Naive thymus-derived CD4-positive, alpha-beta T cell (primary cell): ENCODE measurements at regions of chr5 and their contacts with region 1.

Region 1: DNA sequence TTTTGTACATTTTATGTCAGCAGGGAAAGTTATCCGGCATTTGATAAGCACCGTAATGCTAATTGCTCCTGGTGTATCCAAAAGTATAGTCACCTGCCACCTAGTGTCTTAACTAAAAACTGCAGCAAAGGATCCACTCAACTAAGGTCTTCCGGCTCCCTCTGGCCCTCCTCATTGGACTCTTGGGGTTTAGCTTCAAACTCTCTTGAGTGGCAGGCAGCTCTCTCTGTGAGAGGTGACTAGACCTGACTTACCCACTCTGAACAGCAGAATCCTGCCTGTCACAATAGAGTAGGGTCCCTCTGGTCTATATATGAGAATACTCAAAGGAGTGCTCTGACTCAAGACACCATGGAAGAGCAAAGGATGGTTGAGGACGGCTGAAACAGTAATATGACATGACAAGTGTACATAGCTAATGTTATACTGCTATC is 60.3 kb upstream of the CAST start:
- DNase-seq: peak in 7 of 9 donors; percentile 36 to 68 (median 65)
- ATAC-seq: peak; percentile 87
- H3K4me3 ChIP-seq: no peak overlapping the region
- H3K4me3 Mint-ChIP-seq: peak overlapping the region in 1 of 10 donors; percentile 2
- H3K27ac ChIP-seq: no peak overlapping the region
- H3K27ac Mint-ChIP-seq: no peak overlapping the region
- H3K4me1 ChIP-seq: no peaks in the 10 kb centered on the region
- H3K4me1 Mint-ChIP-seq: peaks cover 0 to 3% (median 0%) of the 10 kb centered on the region in 7 donors
- H3K27me3 ChIP-seq: no peaks in the 10 kb centered on the region
- H3K27me3 Mint-ChIP-seq: peaks cover 4 to 16% (median 4%) of the 10 kb centered on the region in 5 donors

Region 2: GRCh38 chr5:95858661-95859326 is 743.0 kb before region 1 on chr5:
- CTCF ChIA-PET with region 1: interaction called, 3 read pairs
- POLR2A ChIA-PET with region 1: no interaction called
- intact Hi-C with region 1: loop called (anchors 1 kb)
- DNase-seq: peak; percentile 81 to 91 (median 87)
- ATAC-seq: peak; percentile 94
- H3K4me3 ChIP-seq: no peak overlapping the region
- H3K4me3 Mint-ChIP-seq: peak overlapping the region; percentile 25 to 78 (median 62)
- H3K27ac ChIP-seq: no peak overlapping the region
- H3K27ac Mint-ChIP-seq: peak overlapping the region; percentile 10 to 85 (median 56)
- H3K4me1 ChIP-seq: no peaks in the 10 kb centered on the region
- H3K4me1 Mint-ChIP-seq: peaks cover 11 to 43% (median 16%) of the 10 kb centered on the region in 7 donors
- H3K27me3 ChIP-seq: no peaks in the 10 kb centered on the region
- H3K27me3 Mint-ChIP-seq: peaks cover 0 to 18% (median 14%) of the 10 kb centered on the region in 5 donors

Region 3: GRCh38 chr5:96336351-96336985 is 265.4 kb before region 1 on chr5:
- CTCF ChIA-PET with region 1: interaction called, 183 read pairs
- POLR2A ChIA-PET with region 1: no interaction called
- intact Hi-C with region 1: no loop called
- DNase-seq: peak in 8 of 9 donors; percentile 41 to 72 (median 65)
- ATAC-seq: peak; percentile 92
- H3K4me3 ChIP-seq: no peak overlapping the region
- H3K4me3 Mint-ChIP-seq: no peak overlapping the region
- H3K27ac ChIP-seq: no peak overlapping the region
- H3K27ac Mint-ChIP-seq: no peak overlapping the region
- H3K4me1 ChIP-seq: no peaks in the 10 kb centered on the region
- H3K4me1 Mint-ChIP-seq: peaks cover 0 to 9% (median 0%) of the 10 kb centered on the region in 7 donors
- H3K27me3 ChIP-seq: no peaks in the 10 kb centered on the region
- H3K27me3 Mint-ChIP-seq: peaks cover 7 to 26% (median 14%) of the 10 kb centered on the region in 5 donors

Region 4: GRCh38 chr5:96344678-96345577 is 256.9 kb before region 1 on chr5:
- CTCF ChIA-PET with region 1: interaction called, 183 read pairs
- POLR2A ChIA-PET with region 1: interaction called, 3 read pairs
- intact Hi-C with region 1: loop called (anchors 1 kb)
- DNase-seq: peak in 7 of 9 donors; percentile 33 to 70 (median 59)
- ATAC-seq: peak; percentile 91
- H3K4me3 ChIP-seq: no peak overlapping the region
- H3K4me3 Mint-ChIP-seq: peak overlapping the region; percentile 1 to 72 (median 48)
- H3K27ac ChIP-seq: no peak overlapping the region
- H3K27ac Mint-ChIP-seq: peak overlapping the region in 6 of 9 donors; percentile 3 to 53 (median 10)
- H3K4me1 ChIP-seq: peaks cover 6 to 7% of the 10 kb centered on the region in 2 donors
- H3K4me1 Mint-ChIP-seq: peaks cover 5 to 21% (median 18%) of the 10 kb centered on the region in 7 donors
- H3K27me3 ChIP-seq: no peaks in the 10 kb centered on the region
- H3K27me3 Mint-ChIP-seq: peaks cover 0 to 38% (median 8%) of the 10 kb centered on the region in 5 donors

Region 5: GRCh38 chr5:96381526-96381925 is 220.3 kb before region 1 on chr5:
- CTCF ChIA-PET with region 1: no interaction called
- POLR2A ChIA-PET with region 1: no interaction called
- intact Hi-C with region 1: loop called in 1 of 2 experiments (anchors 1 kb)
- DNase-seq: peak in 2 of 9 donors; percentile 3 to 5
- ATAC-seq: no peak
- H3K4me3 ChIP-seq: no peak overlapping the region
- H3K4me3 Mint-ChIP-seq: no peak overlapping the region
- H3K27ac ChIP-seq: no peak overlapping the region
- H3K27ac Mint-ChIP-seq: no peak overlapping the region
- H3K4me1 ChIP-seq: no peaks in the 10 kb centered on the region
- H3K4me1 Mint-ChIP-seq: peaks cover 0 to 4% (median 0%) of the 10 kb centered on the region in 7 donors
- H3K27me3 ChIP-seq: no peaks in the 10 kb centered on the region
- H3K27me3 Mint-ChIP-seq: peaks cover 6 to 23% (median 14%) of the 10 kb centered on the region in 5 donors

Region 6: DNA sequence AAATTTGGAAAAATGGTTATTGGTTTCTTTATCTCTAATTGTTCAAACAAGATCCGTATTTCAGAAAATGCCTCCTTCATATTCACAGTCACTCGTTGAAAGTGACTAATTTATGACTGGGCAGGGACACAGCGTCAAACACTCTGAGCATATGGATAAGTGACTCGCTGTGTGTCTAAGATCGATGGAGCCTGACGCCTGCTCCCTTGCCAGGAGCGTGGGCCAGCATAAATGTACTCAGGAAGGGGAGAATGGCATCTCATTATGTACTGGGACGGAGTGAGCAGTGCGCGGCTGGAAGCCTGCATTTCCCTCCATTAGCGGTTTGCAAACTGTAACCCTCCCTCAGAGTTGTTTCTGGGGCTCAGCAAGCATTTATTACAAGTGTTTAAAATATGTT is 19.5 kb before region 1 on chr5:
- CTCF ChIA-PET with region 1: interaction called, 12 read pairs
- POLR2A ChIA-PET with region 1: no interaction called
- intact Hi-C with region 1: no loop called
- DNase-seq: no peak
- ATAC-seq: no peak
- H3K4me3 ChIP-seq: no peak overlapping the region
- H3K4me3 Mint-ChIP-seq: no peak overlapping the region
- H3K27ac ChIP-seq: no peak overlapping the region
- H3K27ac Mint-ChIP-seq: no peak overlapping the region
- H3K4me1 ChIP-seq: no peaks in the 10 kb centered on the region
- H3K4me1 Mint-ChIP-seq: peaks cover 5 to 8% (median 7%) of the 10 kb centered on the region in 7 donors
- H3K27me3 ChIP-seq: no peaks in the 10 kb centered on the region
- H3K27me3 Mint-ChIP-seq: peaks cover 18 to 49% (median 38%) of the 10 kb centered on the region in 5 donors

Region 7: DNA sequence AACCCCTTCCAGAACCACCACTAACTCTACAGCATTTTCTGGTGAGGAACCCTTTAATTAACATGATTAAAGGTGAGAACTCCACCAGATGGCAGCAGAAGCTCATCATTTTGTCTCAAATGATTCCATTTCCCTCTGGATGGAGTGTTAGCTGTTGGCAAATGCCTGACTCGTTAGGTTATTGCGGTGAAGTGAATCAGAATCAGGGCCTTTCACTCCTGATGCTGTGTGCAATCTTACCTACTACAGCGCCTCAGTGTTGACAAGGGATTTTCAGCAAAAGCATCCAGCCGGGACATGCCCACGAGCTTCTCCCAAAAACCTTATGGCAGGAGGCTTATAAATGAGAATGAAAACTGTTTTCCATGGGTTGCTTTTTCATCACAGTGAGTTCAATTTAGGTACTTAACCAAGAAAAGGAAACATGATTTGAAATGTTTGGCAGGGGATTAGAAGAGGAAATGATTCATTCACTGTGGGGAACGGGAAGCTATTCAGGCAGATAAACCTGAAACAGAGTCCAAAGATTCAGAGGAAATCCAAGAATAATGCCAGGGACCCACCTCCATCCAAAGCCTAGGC is 12.4 kb after region 1 on chr5:
- CTCF ChIA-PET with region 1: interaction called, 12 read pairs
- POLR2A ChIA-PET with region 1: no interaction called
- intact Hi-C with region 1: no loop called
- DNase-seq: peak in 6 of 9 donors; percentile 30 to 51 (median 38)
- ATAC-seq: peak; percentile 72
- H3K4me3 ChIP-seq: no peak overlapping the region
- H3K4me3 Mint-ChIP-seq: no peak overlapping the region
- H3K27ac ChIP-seq: no peak overlapping the region
- H3K27ac Mint-ChIP-seq: no peak overlapping the region
- H3K4me1 ChIP-seq: peaks cover 0 to 5% of the 10 kb centered on the region in 2 donors
- H3K4me1 Mint-ChIP-seq: peaks cover 0 to 5% (median 0%) of the 10 kb centered on the region in 7 donors
- H3K27me3 ChIP-seq: no peaks in the 10 kb centered on the region
- H3K27me3 Mint-ChIP-seq: peaks cover 5 to 43% (median 8%) of the 10 kb centered on the region in 5 donors

Region 8: DNA sequence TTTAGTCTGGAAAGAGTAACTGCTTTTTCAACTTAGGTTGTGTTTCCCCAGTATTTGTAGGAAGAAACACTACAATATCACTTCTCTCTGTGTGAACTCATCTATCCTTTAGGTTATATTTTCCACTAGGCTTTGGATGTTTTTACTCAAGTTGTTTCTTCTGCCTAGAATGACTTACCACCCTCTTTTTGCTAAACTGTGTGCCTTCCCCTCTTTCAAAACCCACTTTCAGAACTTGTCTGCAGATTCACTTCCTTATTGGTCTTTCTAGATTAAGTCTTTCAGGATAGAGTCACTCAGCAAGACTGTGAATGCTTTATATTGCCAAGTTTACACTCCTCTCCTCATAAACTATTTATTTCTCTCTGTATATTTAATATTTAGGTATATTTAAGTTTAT is 46.2 kb after region 1 on chr5:
- CTCF ChIA-PET with region 1: no interaction called
- POLR2A ChIA-PET with region 1: no interaction called
- intact Hi-C with region 1: no loop called
- DNase-seq: no peak
- ATAC-seq: no peak
- H3K4me3 ChIP-seq: no peak overlapping the region
- H3K4me3 Mint-ChIP-seq: no peak overlapping the region
- H3K27ac ChIP-seq: no peak overlapping the region
- H3K27ac Mint-ChIP-seq: peak overlapping the region in 1 of 9 donors; percentile 16
- H3K4me1 ChIP-seq: no peaks in the 10 kb centered on the region
- H3K4me1 Mint-ChIP-seq: peaks cover 0 to 3% (median 0%) of the 10 kb centered on the region in 7 donors
- H3K27me3 ChIP-seq: no peaks in the 10 kb centered on the region
- H3K27me3 Mint-ChIP-seq: peaks cover 0 to 47% (median 6%) of the 10 kb centered on the region in 5 donors

Region 9: GRCh38 chr5:96718635-96719077 is 116.8 kb after region 1 on chr5:
- CTCF ChIA-PET with region 1: no interaction called
- POLR2A ChIA-PET with region 1: no interaction called
- intact Hi-C with region 1: no loop called
- DNase-seq: no peak
- ATAC-seq: no peak
- H3K4me3 ChIP-seq: no peak overlapping the region
- H3K4me3 Mint-ChIP-seq: peak overlapping the region in 1 of 10 donors; percentile 0
- H3K27ac ChIP-seq: no peak overlapping the region
- H3K27ac Mint-ChIP-seq: peak overlapping the region in 4 of 9 donors; percentile 31 to 75 (median 57)
- H3K4me1 ChIP-seq: peaks cover 6 to 17% of the 10 kb centered on the region in 2 donors
- H3K4me1 Mint-ChIP-seq: peaks cover 35 to 73% (median 43%) of the 10 kb centered on the region in 7 donors
- H3K27me3 ChIP-seq: no peaks in the 10 kb centered on the region
- H3K27me3 Mint-ChIP-seq: no peaks in the 10 kb centered on the region